Activated CD4-positive, alpha-beta T cell treated with anti-CD3 and anti-CD28 coated beads, Interleukin-2, amount 10 ng/mL, durations not matched to agents 24 days and 14 days (primary cell): ENCODE measurements at regions of chr1 and their contacts with region 1.

Region 1: GRCh38 chr1:89843281-89844121 is 22.7 kb downstream of the LRRC8D start:
- DNase-seq: peak; percentile 93
- H3K4me3 Mint-ChIP-seq: peak overlapping the region; percentile 97
- H3K27ac Mint-ChIP-seq: peak overlapping the region; percentile 98
- H3K4me1 Mint-ChIP-seq: peaks cover 51% of the 10 kb centered on the region
- H3K27me3 Mint-ChIP-seq: no peaks in the 10 kb centered on the region

Region 2: GRCh38 chr1:88009916-88010315 is 1833.6 kb before region 1 on chr1:
- intact Hi-C with region 1: no loop called
- DNase-seq: no peak
- H3K4me3 Mint-ChIP-seq: no peak overlapping the region
- H3K27ac Mint-ChIP-seq: no peak overlapping the region
- H3K4me1 Mint-ChIP-seq: no peaks in the 10 kb centered on the region
- H3K27me3 Mint-ChIP-seq: no peaks in the 10 kb centered on the region

Region 3: DNA sequence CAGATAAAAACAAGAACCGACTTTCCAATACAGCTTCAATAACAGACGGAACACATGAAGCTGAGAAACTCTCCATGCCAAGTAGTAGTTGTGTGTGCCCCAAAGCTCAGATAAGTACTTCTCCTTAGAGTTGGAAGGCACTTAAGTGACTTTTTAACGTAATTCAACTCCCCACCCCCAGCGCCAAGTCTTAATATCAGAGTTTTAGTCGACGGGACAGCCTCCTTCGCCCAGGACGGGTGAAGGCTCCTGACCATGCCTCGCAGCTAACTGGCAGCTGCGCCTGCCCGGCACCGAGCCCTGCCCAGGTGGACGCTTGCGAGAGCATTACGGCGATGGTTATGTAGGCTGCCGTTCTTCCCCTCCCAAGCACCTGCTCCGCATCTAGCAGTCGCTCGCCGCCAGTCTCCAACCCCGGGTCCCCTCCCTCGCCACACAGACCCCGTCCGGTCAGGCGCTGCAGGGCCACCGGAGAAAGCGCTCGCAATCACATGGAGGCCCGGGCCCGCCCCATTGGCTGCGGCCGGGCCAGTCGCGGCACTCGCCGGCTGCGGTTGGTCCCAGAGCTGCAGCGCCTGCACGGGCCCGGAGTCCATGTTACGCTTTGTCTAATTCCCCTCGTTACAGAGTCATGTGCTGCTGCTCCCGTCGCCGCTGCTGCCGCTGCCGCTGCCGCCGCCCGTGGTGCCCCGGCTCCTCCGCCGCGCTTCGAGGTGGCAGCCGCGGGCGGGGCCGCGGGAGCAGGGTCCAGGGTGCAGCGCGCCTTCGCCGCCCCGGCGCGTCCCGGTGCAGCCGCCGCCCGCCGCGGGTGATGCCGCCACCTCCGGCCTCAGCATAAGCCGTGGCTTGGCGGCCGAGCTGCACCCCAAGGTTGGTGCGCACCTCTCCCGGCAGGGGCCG is 22.8 kb before region 1 on chr1 and contains the start of gene LRRC8D:
- intact Hi-C with region 1: loop called (anchors 1 kb)
- DNase-seq: peak; percentile 92
- H3K4me3 Mint-ChIP-seq: peak within 1 kb of the TSS; percentile 84
- H3K27ac Mint-ChIP-seq: peak within 1 kb of the TSS; percentile 82
- H3K4me1 Mint-ChIP-seq: peaks cover 29% of the 10 kb centered on the region
- H3K27me3 Mint-ChIP-seq: peaks cover 19% of the 10 kb centered on the region
- total RNA-seq, gene LRRC8D: 43.6 and 44.9 TPM in 2 replicates

Region 4: DNA sequence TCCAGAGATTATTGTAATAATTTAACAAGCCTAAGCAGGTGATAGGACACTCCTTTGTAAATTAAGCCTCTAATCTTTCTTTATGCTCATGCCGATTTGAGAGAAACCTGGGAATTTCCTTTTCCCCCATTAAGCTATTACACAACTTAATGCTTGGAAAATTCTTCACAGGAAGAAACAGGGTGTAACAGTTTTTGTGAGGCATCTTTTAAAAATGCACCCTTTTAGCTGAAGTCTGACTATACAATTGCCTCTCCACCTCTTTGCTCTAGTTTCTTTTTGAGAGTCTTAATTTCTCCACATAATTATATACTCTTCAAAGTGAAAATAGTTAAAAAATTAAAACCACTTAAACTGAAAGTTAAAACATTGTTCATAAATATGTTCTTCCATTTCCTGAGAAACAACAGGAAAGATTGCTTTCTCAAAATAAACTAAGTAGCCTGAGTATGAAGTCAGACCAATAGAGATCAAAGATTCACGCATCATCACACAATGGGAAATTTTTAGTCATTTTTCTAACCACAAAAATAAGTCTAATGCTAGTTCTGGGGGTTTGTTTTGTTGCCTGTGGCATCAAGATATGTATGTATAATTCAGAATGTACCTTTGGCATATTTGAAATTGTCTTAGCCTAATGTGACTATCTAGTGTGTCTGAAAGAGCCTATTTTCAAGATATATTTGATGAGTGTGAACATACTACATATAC is 12.1 kb after region 1 on chr1:
- intact Hi-C with region 1: loop called (anchors 1 kb)
- DNase-seq: peak; percentile 73
- H3K4me3 Mint-ChIP-seq: no peak overlapping the region
- H3K27ac Mint-ChIP-seq: no peak overlapping the region
- H3K4me1 Mint-ChIP-seq: peaks cover 5% of the 10 kb centered on the region
- H3K27me3 Mint-ChIP-seq: no peaks in the 10 kb centered on the region

Region 5: GRCh38 chr1:89908672-89909436 is 65.4 kb after region 1 on chr1:
- intact Hi-C with region 1: loop called (anchors 2 kb)
- DNase-seq: no peak
- H3K4me3 Mint-ChIP-seq: no peak overlapping the region
- H3K27ac Mint-ChIP-seq: peak overlapping the region; percentile 68
- H3K4me1 Mint-ChIP-seq: peaks cover 44% of the 10 kb centered on the region
- H3K27me3 Mint-ChIP-seq: no peaks in the 10 kb centered on the region

Region 6: GRCh38 chr1:89953072-89953626 is 109.6 kb after region 1 on chr1:
- intact Hi-C with region 1: loop called (anchors 2 kb)
- DNase-seq: peak; percentile 68
- H3K4me3 Mint-ChIP-seq: no peak overlapping the region
- H3K27ac Mint-ChIP-seq: no peak overlapping the region
- H3K4me1 Mint-ChIP-seq: peaks cover 31% of the 10 kb centered on the region
- H3K27me3 Mint-ChIP-seq: no peaks in the 10 kb centered on the region

Region 7: GRCh38 chr1:89987170-89987819 is 143.8 kb after region 1 on chr1:
- intact Hi-C with region 1: loop called (anchors 1 kb)
- DNase-seq: peak; percentile 90
- H3K4me3 Mint-ChIP-seq: no peak overlapping the region
- H3K27ac Mint-ChIP-seq: no peak overlapping the region
- H3K4me1 Mint-ChIP-seq: peaks cover 12% of the 10 kb centered on the region
- H3K27me3 Mint-ChIP-seq: peaks cover 11% of the 10 kb centered on the region

Region 8: GRCh38 chr1:89994805-89995597 is 151.5 kb after region 1 on chr1 and contains the start of gene ZNF326:
- intact Hi-C with region 1: loop called (anchors 2 kb)
- DNase-seq: peak; percentile 99
- H3K4me3 Mint-ChIP-seq: peak within 1 kb of the TSS; percentile 94
- H3K27ac Mint-ChIP-seq: peak within 1 kb of the TSS; percentile 98
- H3K4me1 Mint-ChIP-seq: peaks cover 35% of the 10 kb centered on the region
- H3K27me3 Mint-ChIP-seq: peaks cover 6% of the 10 kb centered on the region
- total RNA-seq, gene ZNF326: 36.8 and 38.1 TPM in 2 replicates